Activated naive CD4-positive, alpha-beta T cell treated with anti-CD3 and anti-CD28 coated beads for 36 hours (primary cell): ENCODE measurements at regions of chr9 and their contacts with region 1.

Region 1: GRCh38 chr9:21455320-21455719 is 15.1 kb downstream of the IFNA1 start:
- DNase-seq: peak; percentile 32
- H3K4me3 Mint-ChIP-seq: no peak overlapping the region
- H3K27ac Mint-ChIP-seq: no peak overlapping the region
- H3K4me1 Mint-ChIP-seq: no peaks in the 10 kb centered on the region
- H3K27me3 Mint-ChIP-seq: no peaks in the 10 kb centered on the region

Region 2: DNA sequence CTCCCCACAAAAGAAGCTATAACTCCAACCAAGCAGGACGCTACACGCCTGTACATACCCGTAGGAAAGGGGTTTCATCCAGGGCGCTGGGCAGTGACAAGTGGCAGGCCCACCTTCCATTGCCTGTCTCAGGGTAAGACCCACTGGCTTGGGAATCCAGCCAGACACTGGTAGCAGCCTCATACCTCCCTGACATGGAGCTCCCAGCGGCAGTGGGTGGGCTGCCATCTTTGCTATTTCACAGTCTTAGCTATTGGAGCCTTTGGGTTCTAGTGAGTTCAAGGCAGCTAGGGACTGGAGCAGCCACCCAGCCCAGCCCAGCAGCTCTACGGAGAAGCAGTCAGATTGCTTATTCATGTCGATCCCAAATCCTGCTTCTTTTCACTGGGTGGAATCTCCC is 245.0 kb before region 1 on chr9:
- CTCF ChIA-PET with region 1: interaction called, 11 read pairs
- intact Hi-C with region 1: no loop called
- DNase-seq: no peak
- H3K4me3 Mint-ChIP-seq: no peak overlapping the region
- H3K27ac Mint-ChIP-seq: no peak overlapping the region
- H3K4me1 Mint-ChIP-seq: peaks cover 7% of the 10 kb centered on the region
- H3K27me3 Mint-ChIP-seq: peaks cover 5% of the 10 kb centered on the region

Region 3: GRCh38 chr9:21239911-21240310 is 215.4 kb before region 1 on chr9 and contains the start of gene IFNA14:
- CTCF ChIA-PET with region 1: interaction called, 10 read pairs
- intact Hi-C with region 1: loop called (anchors 5 kb)
- DNase-seq: no peak
- H3K4me3 Mint-ChIP-seq: no peak within 1 kb of the TSS
- H3K27ac Mint-ChIP-seq: no peak within 1 kb of the TSS
- H3K4me1 Mint-ChIP-seq: peaks cover 8% of the 10 kb centered on the region
- H3K27me3 Mint-ChIP-seq: peaks cover 2% of the 10 kb centered on the region
- total RNA-seq, gene IFNA14: not detected

Region 4: GRCh38 chr9:21317956-21318923 is 137.1 kb before region 1 on chr9:
- CTCF ChIA-PET with region 1: interaction called, 6 read pairs
- intact Hi-C with region 1: loop called (anchors 1 kb)
- DNase-seq: peak; percentile 61
- H3K4me3 Mint-ChIP-seq: no peak overlapping the region
- H3K27ac Mint-ChIP-seq: no peak overlapping the region
- H3K4me1 Mint-ChIP-seq: peaks cover 4% of the 10 kb centered on the region
- H3K27me3 Mint-ChIP-seq: no peaks in the 10 kb centered on the region

Region 5: GRCh38 chr9:21326526-21327139 is 128.7 kb before region 1 on chr9:
- CTCF ChIA-PET with region 1: interaction called, 21 read pairs
- intact Hi-C with region 1: loop called (anchors 2 kb)
- DNase-seq: no peak
- H3K4me3 Mint-ChIP-seq: no peak overlapping the region
- H3K27ac Mint-ChIP-seq: no peak overlapping the region
- H3K4me1 Mint-ChIP-seq: peaks cover 41% of the 10 kb centered on the region
- H3K27me3 Mint-ChIP-seq: no peaks in the 10 kb centered on the region

Region 6: GRCh38 chr9:21434202-21435014 is 20.9 kb before region 1 on chr9:
- CTCF ChIA-PET with region 1: interaction called, 28 read pairs
- intact Hi-C with region 1: loop called (anchors 1 kb)
- DNase-seq: peak; percentile 72
- H3K4me3 Mint-ChIP-seq: no peak overlapping the region
- H3K27ac Mint-ChIP-seq: no peak overlapping the region
- H3K4me1 Mint-ChIP-seq: no peaks in the 10 kb centered on the region
- H3K27me3 Mint-ChIP-seq: peaks cover 9% of the 10 kb centered on the region